HepG2 (cell line): ENCODE measurements at regions of chr17 and their contacts with region 1.

Region 1: DNA sequence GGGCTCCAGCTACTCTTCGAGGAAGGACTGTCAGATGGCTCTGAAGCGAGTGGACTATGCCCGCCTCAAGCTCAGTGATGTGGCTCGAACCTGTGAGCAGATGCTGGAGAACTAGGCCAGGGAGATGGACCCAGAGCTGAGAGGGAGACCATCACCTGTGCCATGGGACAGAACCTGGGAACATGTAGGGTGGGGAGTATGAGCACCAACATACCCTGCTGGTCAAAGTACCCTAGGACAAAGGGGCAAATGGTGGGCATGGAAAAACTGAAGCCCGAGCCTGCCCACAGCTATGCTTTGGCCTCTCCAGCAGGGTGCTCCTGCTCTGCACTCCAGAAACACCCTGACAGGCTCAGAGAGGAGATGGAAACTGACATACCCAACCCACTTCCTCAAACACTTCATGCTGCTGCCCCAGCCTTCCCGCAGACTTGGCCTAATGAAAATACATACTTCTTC is 1.9 kb downstream of the MED11 start:
- DNase-seq: peak; percentile 37
- ATAC-seq: peak; percentile 7; the same call in 2 of the 3 replicates
- H3K4me3 ChIP-seq: no peak overlapping the region
- H3K27ac ChIP-seq: peak overlapping the region; percentile 10
- H3K4me1 ChIP-seq: peaks cover 71% of the 10 kb centered on the region
- H3K27me3 ChIP-seq: no peaks in the 10 kb centered on the region; a peak in 1 of 5 replicates
- CTCF ChIP-seq: peak; percentile 60
- EP300 ChIP-seq: no peak
- POLR2A ChIP-seq: 0 out of 4 replicates have a peak, but pooled peaks of 1 of the 2 experiments have one; percentile 12
- RAD21 ChIP-seq: peak; percentile 46

Region 2: DNA sequence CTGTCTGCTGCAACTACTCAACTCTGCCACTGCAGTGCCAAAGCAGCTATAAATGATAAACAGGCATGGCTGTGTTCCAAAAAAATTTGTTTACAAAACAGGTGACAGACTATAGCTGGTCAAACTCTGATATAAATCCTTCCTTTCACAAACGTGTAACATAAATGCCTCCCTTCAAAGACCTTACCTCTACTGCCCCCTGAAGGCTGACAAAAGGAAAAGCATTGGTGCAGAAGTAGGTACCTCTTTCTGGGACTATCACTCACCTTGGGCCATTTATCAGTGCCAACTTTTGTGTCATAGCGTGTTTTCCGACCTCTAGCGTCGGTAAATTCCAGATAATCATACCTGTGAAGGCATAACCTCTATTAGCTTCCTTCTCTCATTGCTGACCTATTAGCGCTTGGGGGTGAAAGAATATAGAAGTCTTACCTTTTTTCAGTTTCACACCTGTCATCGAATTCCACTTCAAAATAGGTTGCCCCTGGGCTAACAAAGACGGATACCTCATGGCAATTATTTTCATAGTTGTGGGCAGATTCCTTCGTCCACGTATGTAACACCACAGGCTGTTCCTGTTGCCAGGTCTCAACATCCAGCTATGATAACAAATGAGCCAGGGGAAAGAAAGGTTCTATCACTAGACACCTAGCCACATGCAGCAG is 658.1 kb before region 1 on chr17:
- CTCF ChIA-PET with region 1: no interaction called
- POLR2A ChIA-PET with region 1: no interaction called
- in situ Hi-C with region 1: no loop called
- intact Hi-C with region 1: no loop called
- DNase-seq: peak; percentile 46
- ATAC-seq: peak; percentile 67
- H3K4me3 ChIP-seq: no peak overlapping the region
- H3K27ac ChIP-seq: no peak overlapping the region
- H3K4me1 ChIP-seq: no peaks in the 10 kb centered on the region
- H3K27me3 ChIP-seq: no peaks in the 10 kb centered on the region
- CTCF ChIP-seq: peak; percentile 81
- EP300 ChIP-seq: no peak
- POLR2A ChIP-seq: no peak
- RAD21 ChIP-seq: peak; percentile 52

Region 3: GRCh38 chr17:4709794-4710692 is 23.1 kb before region 1 on chr17 and contains the start of gene ARRB2:
- CTCF ChIA-PET with region 1: interaction called, 6 read pairs
- POLR2A ChIA-PET with region 1: interaction called, 83 read pairs
- in situ Hi-C with region 1: no loop called
- intact Hi-C with region 1: loop called (anchors 1 kb)
- DNase-seq: peak; percentile 97
- ATAC-seq: peak; percentile 80
- H3K4me3 ChIP-seq: peak within 1 kb of the TSS; percentile 72 to 86 (median 85)
- H3K27ac ChIP-seq: peak within 1 kb of the TSS; percentile 65
- H3K4me1 ChIP-seq: peaks cover 43% of the 10 kb centered on the region
- H3K27me3 ChIP-seq: no peaks in the 10 kb centered on the region
- CTCF ChIP-seq: peak; percentile 85
- EP300 ChIP-seq: 0 out of 4 replicates have a peak, but pooled peaks of 1 of the 2 experiments have one; percentile 13
- POLR2A ChIP-seq: peak in 1 of 2 experiments; percentile 58; a peak in 3 of 4 replicates
- RAD21 ChIP-seq: peak; percentile 92
- total RNA-seq, gene ARRB2: 15.5 and 21.5 TPM in 2 replicates

Region 4: DNA sequence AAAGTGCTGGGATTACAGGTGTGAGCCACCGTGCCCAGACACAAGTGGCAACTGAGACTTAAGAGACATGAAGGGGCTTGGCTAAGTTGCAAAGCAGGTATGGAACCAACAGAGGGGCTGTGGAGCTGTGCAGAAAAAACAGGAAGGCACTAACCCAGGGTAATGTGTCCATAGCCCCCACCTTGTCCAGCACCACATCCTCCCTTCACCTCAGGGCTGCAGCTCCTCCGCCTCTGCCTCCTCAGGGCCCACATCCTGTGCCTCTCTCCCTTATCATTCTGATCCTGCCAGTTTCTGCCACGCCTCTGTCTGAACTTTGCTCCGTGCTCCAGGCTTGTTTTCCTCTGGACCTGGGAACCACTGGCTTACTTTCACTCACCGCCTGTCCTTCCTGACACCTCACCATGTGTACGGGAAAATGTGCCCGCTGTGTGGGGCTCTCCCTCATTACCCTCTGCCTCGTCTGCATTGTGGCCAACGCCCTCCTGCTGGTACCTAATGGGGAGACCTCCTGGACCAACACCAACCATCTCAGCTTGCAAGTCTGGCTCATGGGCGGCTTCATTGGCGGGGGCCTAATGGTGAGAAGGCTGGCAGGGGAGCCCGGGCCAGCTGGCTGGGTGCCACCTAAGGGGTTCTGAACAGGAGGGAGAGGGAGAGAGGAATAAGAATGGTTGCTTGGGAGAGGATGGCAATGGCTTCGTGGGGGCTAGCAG is 38.6 kb after region 1 on chr17 and contains the start of gene TM4SF5:
- CTCF ChIA-PET with region 1: no interaction called
- POLR2A ChIA-PET with region 1: interaction called, 56 read pairs
- in situ Hi-C with region 1: no loop called
- intact Hi-C with region 1: loop called (anchors 5 kb)
- DNase-seq: peak; percentile 95
- ATAC-seq: peak; percentile 96
- H3K4me3 ChIP-seq: peak within 1 kb of the TSS; percentile 65 to 83 (median 75)
- H3K27ac ChIP-seq: peak within 1 kb of the TSS; percentile 76
- H3K4me1 ChIP-seq: peaks cover 78% of the 10 kb centered on the region
- H3K27me3 ChIP-seq: no peaks in the 10 kb centered on the region; a peak in 1 of 5 replicates
- CTCF ChIP-seq: peak; percentile 41
- EP300 ChIP-seq: peak in 1 of 2 experiments; percentile 84; a peak in 2 of 4 replicates
- POLR2A ChIP-seq: peak; percentile 53 to 96
- RAD21 ChIP-seq: no peak
- total RNA-seq, gene TM4SF5: 15.6 and 30.1 TPM in 2 replicates

Region 5: GRCh38 chr17:4796553-4796921 is 63.4 kb after region 1 on chr17:
- CTCF ChIA-PET with region 1: interaction called, 3 read pairs
- POLR2A ChIA-PET with region 1: interaction called, 23 read pairs
- in situ Hi-C with region 1: no loop called
- intact Hi-C with region 1: no loop called
- DNase-seq: peak; percentile 33
- ATAC-seq: peak; percentile 86
- H3K4me3 ChIP-seq: peak overlapping the region; percentile 85 to 97 (median 86)
- H3K27ac ChIP-seq: peak overlapping the region; percentile 79
- H3K4me1 ChIP-seq: peaks cover 17% of the 10 kb centered on the region
- H3K27me3 ChIP-seq: no peaks in the 10 kb centered on the region; a peak in 1 of 5 replicates
- CTCF ChIP-seq: no peak
- EP300 ChIP-seq: no peak
- POLR2A ChIP-seq: 0 out of 4 replicates have a peak, but pooled peaks of 1 of the 2 experiments have one; percentile 5
- RAD21 ChIP-seq: no peak

Region 6: DNA sequence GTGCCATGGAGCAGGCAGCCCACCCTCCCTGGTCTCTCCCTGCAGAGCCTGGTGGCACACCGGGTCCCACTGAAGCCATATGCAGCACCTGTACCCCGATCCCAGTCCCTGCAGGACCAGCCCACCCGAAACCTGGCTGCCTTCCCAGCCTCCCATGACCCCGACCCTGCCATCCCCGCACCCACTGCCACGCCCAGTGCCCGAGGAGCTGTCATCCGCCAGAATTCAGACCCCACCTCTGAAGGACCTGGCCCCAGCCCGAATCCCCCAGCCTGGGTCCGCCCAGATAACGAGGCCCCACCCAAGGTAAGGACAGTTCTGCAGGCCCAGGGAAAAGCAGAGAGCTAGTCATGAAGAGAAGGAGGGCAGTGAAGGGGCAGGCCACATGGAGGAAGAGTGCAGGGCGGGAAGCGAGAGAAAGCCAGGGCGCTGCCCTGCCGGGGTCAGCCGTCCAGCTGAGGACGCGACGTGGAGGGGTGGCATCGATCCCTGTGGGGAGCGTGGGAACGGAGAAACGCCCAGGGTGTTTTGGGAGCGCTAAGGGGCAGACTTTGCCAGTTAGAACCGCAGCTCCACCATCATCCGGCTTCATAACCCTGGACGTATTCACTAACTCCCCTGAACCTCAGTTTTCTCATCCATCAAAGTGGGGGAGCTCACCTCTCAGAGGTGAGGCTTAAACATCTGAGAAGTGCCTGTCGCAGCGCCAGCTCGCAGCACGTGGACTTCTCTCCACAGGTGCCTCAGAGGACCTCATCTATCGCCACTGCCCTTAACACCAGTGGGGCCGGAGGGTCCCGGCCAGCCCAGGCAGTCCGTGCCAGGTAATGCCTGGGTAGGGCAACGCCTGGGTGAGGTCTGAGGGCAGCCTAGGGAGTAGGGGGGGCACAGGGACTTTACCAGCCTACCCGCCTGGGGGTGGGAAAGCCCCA is 158.6 kb after region 1 on chr17:
- CTCF ChIA-PET with region 1: interaction called, 8 read pairs
- POLR2A ChIA-PET with region 1: interaction called, 3 read pairs
- in situ Hi-C with region 1: no loop called
- intact Hi-C with region 1: loop called (anchors 1 kb)
- DNase-seq: no peak
- ATAC-seq: no peak
- H3K4me3 ChIP-seq: no peak overlapping the region
- H3K27ac ChIP-seq: no peak overlapping the region
- H3K4me1 ChIP-seq: no peaks in the 10 kb centered on the region
- H3K27me3 ChIP-seq: no peaks in the 10 kb centered on the region
- CTCF ChIP-seq: no peak
- EP300 ChIP-seq: no peak
- POLR2A ChIP-seq: no peak
- RAD21 ChIP-seq: no peak